Spleen (tissue), 13 donors: ENCODE measurements at regions of chr17 and their contacts with region 1.

Region 1: DNA sequence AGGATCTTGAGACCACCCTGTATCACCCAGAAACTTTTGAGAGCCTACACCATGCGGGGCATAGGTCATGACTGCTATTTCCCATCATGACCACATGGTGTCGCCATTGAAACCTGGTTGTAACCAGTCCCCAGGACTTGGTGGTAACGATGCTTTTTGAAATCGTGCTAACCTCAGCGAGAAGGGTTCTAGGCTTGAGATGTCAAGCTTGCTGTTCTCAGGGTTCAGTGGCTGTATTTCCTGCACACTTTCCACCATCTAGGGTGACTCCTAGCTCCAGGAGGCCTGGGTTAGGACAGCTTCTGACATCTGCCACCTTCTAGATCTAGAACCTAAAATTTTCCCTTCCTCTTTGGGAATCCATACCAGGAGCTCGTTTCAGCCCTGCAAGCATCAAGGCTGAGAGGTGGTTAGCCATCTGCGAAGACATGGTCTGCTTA is 13.0 kb upstream of the SPNS3 start:
- DNase-seq: no peak
- H3K4me3 ChIP-seq: no peak overlapping the region
- H3K27ac ChIP-seq: no peak overlapping the region
- H3K4me1 ChIP-seq: peaks cover 0 to 13% (median 7%) of the 10 kb centered on the region in 6 donors
- H3K27me3 ChIP-seq: no peaks in the 10 kb centered on the region
- CTCF ChIP-seq: peak; percentile 82 to 93 (median 87)
- POLR2A ChIP-seq: no peak

Region 2: DNA sequence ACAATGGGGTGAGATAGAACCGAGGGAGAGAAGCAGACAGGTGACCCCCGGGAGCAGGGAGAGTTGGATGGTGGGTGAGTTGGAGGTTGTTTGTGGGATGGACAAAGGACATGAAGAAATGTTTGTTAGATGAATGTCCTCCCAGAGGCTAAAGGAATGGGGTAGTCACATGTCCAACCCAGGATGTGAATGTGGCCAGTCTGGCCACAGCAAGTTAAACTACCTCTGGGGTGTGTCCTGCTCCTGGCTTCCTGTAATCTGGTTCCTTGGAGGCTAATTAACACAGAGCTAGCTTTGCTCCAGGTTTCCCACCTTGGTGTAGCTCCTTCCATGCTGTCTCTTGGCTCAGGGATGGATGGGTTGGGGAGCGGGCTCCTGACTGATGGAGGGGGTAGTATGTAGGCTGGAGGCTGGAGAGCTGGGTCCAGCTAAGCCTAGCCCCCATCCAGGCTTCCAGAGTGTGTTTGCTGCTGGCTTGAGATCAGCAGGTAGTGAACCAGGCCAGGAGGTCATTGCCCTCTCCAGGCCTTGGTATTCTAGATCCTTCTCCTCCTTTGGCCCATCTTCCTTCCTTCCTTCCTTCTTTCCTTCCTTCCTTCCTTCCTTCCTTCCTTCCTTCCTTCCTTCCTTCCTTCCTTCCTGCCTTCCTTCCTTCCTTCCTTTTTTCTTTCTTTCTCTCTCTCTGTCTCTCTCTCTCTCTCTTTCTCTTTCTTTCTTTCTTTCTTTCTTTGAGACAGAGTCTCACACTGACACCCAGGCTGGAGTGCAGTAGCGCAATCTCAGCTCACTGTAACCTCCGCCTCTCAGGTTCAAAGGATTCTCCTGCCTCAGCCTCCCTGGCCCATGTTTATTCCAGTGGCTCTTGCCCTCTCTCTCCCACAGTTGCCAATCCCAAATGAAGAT is 26.3 kb before region 1 on chr17:
- intact Hi-C with region 1: no loop called
- DNase-seq: no peak
- H3K4me3 ChIP-seq: no peak overlapping the region
- H3K27ac ChIP-seq: no peak overlapping the region
- H3K4me1 ChIP-seq: peaks cover 0 to 29% (median 14%) of the 10 kb centered on the region in 6 donors
- H3K27me3 ChIP-seq: no peaks in the 10 kb centered on the region
- CTCF ChIP-seq: no peak
- POLR2A ChIP-seq: no peak

Region 3: DNA sequence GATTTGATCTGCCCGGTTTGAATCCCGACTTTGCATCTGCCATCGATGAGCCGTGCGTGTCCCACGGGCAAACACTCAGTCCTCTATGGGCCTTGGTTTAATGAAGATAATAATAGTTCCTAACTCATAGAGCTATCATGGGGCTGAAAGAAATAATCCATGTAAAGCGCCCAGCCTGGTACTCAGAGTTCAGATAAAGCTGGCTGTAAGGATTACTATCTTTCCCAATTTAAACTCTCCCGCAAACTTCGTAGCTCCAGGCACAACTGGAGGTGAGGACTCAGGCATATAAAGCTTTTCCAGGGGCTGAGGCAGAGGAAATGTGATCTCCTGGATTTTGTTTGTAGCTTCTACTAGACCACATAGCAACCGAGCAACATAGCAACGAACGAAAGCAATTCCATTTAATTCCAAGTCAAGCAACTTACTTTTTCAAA is 204.5 kb after region 1 on chr17:
- intact Hi-C with region 1: loop called (anchors 5 kb)
- DNase-seq: no peak
- H3K4me3 ChIP-seq: no peak overlapping the region
- H3K27ac ChIP-seq: no peak overlapping the region
- H3K4me1 ChIP-seq: peaks cover 0 to 12% (median 0%) of the 10 kb centered on the region in 6 donors
- H3K27me3 ChIP-seq: peaks cover 0 to 4% (median 0%) of the 10 kb centered on the region in 7 donors
- CTCF ChIP-seq: no peak
- POLR2A ChIP-seq: no peak